Head of caudate nucleus (tissue), 42 donors: ENCODE measurements at regions of chr4 and their contacts with region 1.

Region 1: GRCh38 chr4:94403751-94404150 is 48.0 kb upstream of the PDLIM5 start:
- DNase-seq: no peak

Region 2: DNA sequence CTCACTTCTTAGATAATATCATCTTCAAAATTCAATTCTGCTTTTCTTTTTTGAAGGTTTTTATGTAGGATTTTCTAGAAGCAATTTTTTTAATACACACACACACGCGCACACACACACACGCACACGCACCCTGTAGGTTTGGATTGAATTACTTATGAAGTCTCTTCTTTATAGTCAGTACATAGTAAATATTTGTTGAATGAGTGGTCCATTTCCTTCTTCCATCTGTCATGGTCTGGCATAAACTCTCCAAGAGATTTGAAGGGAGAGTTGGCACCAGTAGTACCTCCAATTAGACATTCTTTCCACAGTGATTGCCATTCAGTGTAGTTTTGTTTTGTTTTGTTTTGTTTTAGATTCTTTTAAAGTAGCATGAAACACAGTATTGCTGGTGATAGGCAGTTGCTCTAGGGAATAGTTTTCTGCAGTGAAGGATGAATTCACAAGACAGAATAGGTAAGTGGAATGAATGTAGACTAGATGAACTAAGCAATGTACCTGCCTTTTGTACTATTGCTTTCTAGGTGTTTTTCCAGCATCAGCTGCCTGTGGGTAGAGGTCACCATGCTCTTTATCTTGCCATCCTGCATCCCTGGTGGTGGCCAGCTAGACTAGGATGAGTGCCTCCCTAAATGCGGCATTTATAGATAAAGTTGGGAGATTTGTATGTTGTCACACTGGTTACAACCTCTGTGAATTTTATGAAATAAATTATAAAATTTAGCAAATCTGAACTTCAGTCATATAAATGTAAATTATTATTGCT is 68.5 kb after region 1 on chr4:
- intact Hi-C with region 1: no loop called
- DNase-seq: no peak

Region 3: GRCh38 chr4:94500685-94501084 is 96.9 kb after region 1 on chr4:
- intact Hi-C with region 1: no loop called
- DNase-seq: no peak

Region 4: GRCh38 chr4:94595879-94596483 is 192.2 kb after region 1 on chr4:
- intact Hi-C with region 1: loop called (anchors 2 kb)
- DNase-seq: no peak